GM12878 (cell line): ENCODE measurements at regions of chr6 and their contacts with region 1.

Region 1: GRCh38 chr6:25404693-25405169 is 125.6 kb downstream of the CARMIL1 start:
- DNase-seq: peak; percentile 90
- ATAC-seq: peak; percentile 95
- H3K4me3 ChIP-seq: peak overlapping the region; percentile 46; the same call in 1 of the 2 replicates
- H3K27ac ChIP-seq: peak overlapping the region; percentile 76
- H3K4me1 ChIP-seq: peaks cover 27% of the 10 kb centered on the region
- H3K27me3 ChIP-seq: no peaks in the 10 kb centered on the region
- CTCF ChIP-seq: no peak
- EP300 ChIP-seq: peak; percentile 76 to 86; a peak in 3 of 4 replicates
- POLR2A ChIP-seq: 0 out of 2 replicates have a peak, but pooled peaks have one; percentile 42
- RAD21 ChIP-seq: no peak

Region 2: GRCh38 chr6:25278914-25279747 is 125.6 kb before region 1 on chr6 and contains the start of gene CARMIL1:
- CTCF ChIA-PET with region 1: interaction called, 27 read pairs
- POLR2A ChIA-PET with region 1: no interaction called
- RAD21 ChIA-PET with region 1: interaction called, 39 read pairs
- SMC1A ChIA-PET with region 1: interaction called, 36 read pairs
- in situ Hi-C with region 1: no loop called
- intact Hi-C with region 1: loop called (anchors 2 kb)
- DNase-seq: no peak
- ATAC-seq: peak; percentile 88
- H3K4me3 ChIP-seq: peak within 1 kb of the TSS; percentile 92
- H3K27ac ChIP-seq: peak within 1 kb of the TSS; percentile 50
- H3K4me1 ChIP-seq: 0 out of 2 replicates have a peak, but pooled peaks cover 5% of the 10 kb centered on the region
- H3K27me3 ChIP-seq: no peaks in the 10 kb centered on the region
- CTCF ChIP-seq: peak; percentile 64 to 81 (median 75)
- EP300 ChIP-seq: no peak
- POLR2A ChIP-seq: no peak
- RAD21 ChIP-seq: peak; percentile 79
- polyA plus RNA-seq, gene CARMIL1: 9.4 to 11.3 TPM

Region 3: GRCh38 chr6:25330796-25331685 is 73.7 kb before region 1 on chr6:
- CTCF ChIA-PET with region 1: no interaction called
- POLR2A ChIA-PET with region 1: interaction called, 5 read pairs
- RAD21 ChIA-PET with region 1: interaction called, 18 read pairs
- SMC1A ChIA-PET with region 1: interaction called, 11 read pairs
- in situ Hi-C with region 1: no loop called
- intact Hi-C with region 1: no loop called
- DNase-seq: no peak
- ATAC-seq: no peak
- H3K4me3 ChIP-seq: no peak overlapping the region
- H3K27ac ChIP-seq: no peak overlapping the region
- H3K4me1 ChIP-seq: peaks cover 7% of the 10 kb centered on the region
- H3K27me3 ChIP-seq: no peaks in the 10 kb centered on the region
- CTCF ChIP-seq: no peak
- EP300 ChIP-seq: no peak
- POLR2A ChIP-seq: no peak
- RAD21 ChIP-seq: no peak

Region 4: GRCh38 chr6:25359191-25359861 is 45.4 kb before region 1 on chr6:
- CTCF ChIA-PET with region 1: interaction called, 10 read pairs
- POLR2A ChIA-PET with region 1: interaction called, 9 read pairs
- RAD21 ChIA-PET with region 1: interaction called, 36 read pairs
- SMC1A ChIA-PET with region 1: interaction called, 50 read pairs
- in situ Hi-C with region 1: no loop called
- intact Hi-C with region 1: no loop called
- DNase-seq: no peak
- ATAC-seq: no peak; the same call in 2 of the 3 replicates
- H3K4me3 ChIP-seq: no peak overlapping the region
- H3K27ac ChIP-seq: no peak overlapping the region
- H3K4me1 ChIP-seq: no peaks in the 10 kb centered on the region
- H3K27me3 ChIP-seq: no peaks in the 10 kb centered on the region
- CTCF ChIP-seq: no peak
- EP300 ChIP-seq: no peak
- POLR2A ChIP-seq: no peak
- RAD21 ChIP-seq: no peak

Region 5: GRCh38 chr6:25389471-25389870 is 15.3 kb before region 1 on chr6:
- CTCF ChIA-PET with region 1: interaction called, 9 read pairs
- POLR2A ChIA-PET with region 1: interaction called, 28 read pairs
- RAD21 ChIA-PET with region 1: interaction called, 24 read pairs
- SMC1A ChIA-PET with region 1: interaction called, 124 read pairs
- in situ Hi-C with region 1: no loop called
- intact Hi-C with region 1: no loop called
- DNase-seq: no peak
- ATAC-seq: peak; percentile 19; the same call in 1 of the 3 replicates
- H3K4me3 ChIP-seq: no peak overlapping the region
- H3K27ac ChIP-seq: no peak overlapping the region
- H3K4me1 ChIP-seq: peaks cover 11% of the 10 kb centered on the region
- H3K27me3 ChIP-seq: no peaks in the 10 kb centered on the region
- CTCF ChIP-seq: no peak
- EP300 ChIP-seq: no peak
- POLR2A ChIP-seq: no peak
- RAD21 ChIP-seq: no peak

Region 6: GRCh38 chr6:25426901-25427300 is 22.2 kb after region 1 on chr6:
- CTCF ChIA-PET with region 1: no interaction called
- POLR2A ChIA-PET with region 1: no interaction called
- RAD21 ChIA-PET with region 1: interaction called, 3 read pairs
- SMC1A ChIA-PET with region 1: interaction called, 10 read pairs
- in situ Hi-C with region 1: no loop called
- intact Hi-C with region 1: no loop called
- DNase-seq: no peak
- ATAC-seq: no peak
- H3K4me3 ChIP-seq: no peak overlapping the region
- H3K27ac ChIP-seq: no peak overlapping the region
- H3K4me1 ChIP-seq: no peaks in the 10 kb centered on the region
- H3K27me3 ChIP-seq: no peaks in the 10 kb centered on the region
- CTCF ChIP-seq: no peak
- EP300 ChIP-seq: no peak
- POLR2A ChIP-seq: no peak
- RAD21 ChIP-seq: no peak

Region 7: GRCh38 chr6:25435416-25435985 is 30.8 kb after region 1 on chr6:
- CTCF ChIA-PET with region 1: interaction called, 3 read pairs
- POLR2A ChIA-PET with region 1: no interaction called
- RAD21 ChIA-PET with region 1: no interaction called
- SMC1A ChIA-PET with region 1: interaction called, 12 read pairs
- in situ Hi-C with region 1: no loop called
- intact Hi-C with region 1: no loop called
- DNase-seq: no peak
- ATAC-seq: no peak
- H3K4me3 ChIP-seq: no peak overlapping the region
- H3K27ac ChIP-seq: no peak overlapping the region
- H3K4me1 ChIP-seq: no peaks in the 10 kb centered on the region
- H3K27me3 ChIP-seq: no peaks in the 10 kb centered on the region
- CTCF ChIP-seq: no peak
- EP300 ChIP-seq: no peak
- POLR2A ChIP-seq: no peak
- RAD21 ChIP-seq: no peak